GM12878 (cell line): ENCODE measurements at regions of chr11 and their contacts with region 1.

Region 1: DNA sequence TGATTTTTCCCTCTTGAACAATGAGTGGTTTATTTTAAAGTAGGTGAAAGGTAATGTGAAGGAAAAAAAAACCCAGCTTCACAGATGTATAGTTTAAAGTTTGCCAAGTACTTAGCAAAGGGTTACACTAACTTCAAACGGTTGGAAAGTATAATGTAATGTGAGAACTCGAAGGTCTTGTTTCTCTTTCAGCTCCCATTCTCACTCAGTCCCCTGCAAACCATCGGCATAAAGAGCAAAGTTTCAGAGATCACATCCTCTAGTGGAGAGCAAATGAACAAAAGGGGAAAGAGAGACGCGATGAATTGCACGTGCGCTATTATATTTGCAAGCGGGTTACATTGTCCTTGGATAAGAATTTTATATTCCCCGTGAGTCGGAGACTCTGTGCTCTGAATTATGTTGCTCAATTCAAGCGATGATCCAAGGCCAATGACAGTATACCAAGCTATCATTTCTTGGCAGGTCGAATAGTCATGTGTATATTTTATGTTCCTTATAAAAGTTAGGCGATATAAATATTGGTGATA is 37.6 kb upstream of the BIRC3 start:
- DNase-seq: peak; percentile 68
- ATAC-seq: peak; percentile 96
- H3K4me3 ChIP-seq: no peak overlapping the region
- H3K27ac ChIP-seq: no peak overlapping the region
- H3K4me1 ChIP-seq: peaks cover 4% of the 10 kb centered on the region; the same call in 1 of the 2 replicates
- H3K27me3 ChIP-seq: no peaks in the 10 kb centered on the region
- CTCF ChIP-seq: peak; percentile 16 to 30 (median 27); a peak in 3 of 6 replicates
- EP300 ChIP-seq: 0 out of 4 replicates have a peak, but pooled peaks of 1 of the 2 experiments have one; percentile 18
- POLR2A ChIP-seq: no peak
- RAD21 ChIP-seq: no peak

Region 2: DNA sequence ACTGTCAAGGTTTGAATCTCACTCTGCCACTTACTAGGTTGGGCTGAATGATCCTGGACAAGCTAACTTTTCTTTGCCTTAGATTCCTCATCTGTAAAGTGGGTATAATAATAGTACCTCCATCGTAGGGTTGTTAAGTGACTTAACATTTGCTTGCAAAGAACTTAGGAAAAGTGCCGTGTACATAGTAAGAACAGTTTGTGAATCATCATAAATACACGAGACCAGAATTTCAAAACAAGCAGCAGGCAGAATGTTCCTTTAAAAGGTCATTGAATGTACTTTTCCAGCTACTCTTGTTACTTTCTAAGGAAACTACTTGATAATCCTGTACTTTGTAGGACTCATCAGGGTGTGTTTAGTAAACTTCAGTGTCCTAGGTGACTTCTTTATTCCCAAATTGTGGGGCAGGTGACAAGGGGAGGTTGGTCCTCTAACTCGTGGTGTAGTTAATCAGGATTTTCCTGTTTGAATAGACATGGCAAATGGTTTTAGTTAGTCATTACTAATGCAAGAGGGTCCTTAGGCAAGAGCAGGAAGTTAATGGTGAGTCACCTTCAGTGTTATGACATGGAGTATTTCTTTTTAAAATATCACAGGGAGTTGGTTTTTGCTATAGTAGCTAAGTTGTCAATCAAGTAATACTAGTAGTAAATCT is 101.6 kb before region 1 on chr11:
- CTCF ChIA-PET with region 1: no interaction called
- POLR2A ChIA-PET with region 1: no interaction called
- RAD21 ChIA-PET with region 1: no interaction called
- SMC1A ChIA-PET with region 1: no interaction called
- in situ Hi-C with region 1: no loop called
- intact Hi-C with region 1: no loop called
- DNase-seq: no peak
- ATAC-seq: no peak
- H3K4me3 ChIP-seq: no peak overlapping the region
- H3K27ac ChIP-seq: no peak overlapping the region
- H3K4me1 ChIP-seq: no peaks in the 10 kb centered on the region
- H3K27me3 ChIP-seq: no peaks in the 10 kb centered on the region; a peak in 1 of 4 replicates
- CTCF ChIP-seq: no peak
- EP300 ChIP-seq: no peak
- POLR2A ChIP-seq: no peak
- RAD21 ChIP-seq: no peak

Region 3: DNA sequence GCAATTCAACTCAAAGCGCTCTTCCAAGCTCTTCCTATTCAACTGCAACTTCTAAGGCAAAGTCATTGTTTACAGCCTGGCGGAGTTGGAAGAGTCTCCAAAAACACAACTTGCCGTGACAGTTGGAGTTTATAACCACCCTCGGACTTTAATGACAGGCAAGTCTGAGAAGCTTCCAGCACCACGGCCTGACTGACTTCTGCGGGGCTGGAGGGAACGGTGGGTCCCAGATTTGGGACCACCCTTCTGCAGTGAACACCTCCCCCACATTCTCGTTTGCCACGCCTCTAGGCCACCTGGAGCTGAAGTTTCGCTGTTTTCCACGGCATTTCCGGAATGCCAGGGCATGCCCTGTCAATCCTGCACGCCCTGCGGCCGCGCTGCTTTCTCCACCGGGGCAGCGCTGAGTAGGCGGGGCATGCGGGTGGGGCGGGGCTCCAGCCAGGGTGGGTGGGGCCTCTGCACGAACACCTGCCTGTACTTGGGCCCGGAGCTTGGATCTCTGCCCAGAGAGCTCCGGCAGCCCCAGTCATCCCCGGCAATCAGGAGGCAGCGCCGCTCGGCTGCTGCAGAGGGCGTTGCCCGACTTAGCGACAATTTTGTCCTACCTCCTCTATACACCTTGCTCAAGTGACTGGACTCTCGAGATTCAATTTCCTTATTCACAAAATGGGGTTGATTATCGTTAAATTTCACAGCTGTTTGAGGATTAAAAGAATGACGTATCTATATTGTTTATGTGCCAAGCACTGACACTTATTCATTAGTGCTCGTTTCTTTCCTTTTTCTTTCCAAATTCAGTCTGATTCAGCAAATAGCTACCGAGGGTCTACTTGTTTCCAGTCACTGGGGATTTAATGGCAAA is 11.1 kb before region 1 on chr11:
- CTCF ChIA-PET with region 1: interaction called, 19 read pairs
- POLR2A ChIA-PET with region 1: interaction called, 4 read pairs
- RAD21 ChIA-PET with region 1: interaction called, 11 read pairs
- SMC1A ChIA-PET with region 1: interaction called, 17 read pairs
- in situ Hi-C with region 1: no loop called
- intact Hi-C with region 1: no loop called
- DNase-seq: peak; percentile 17
- ATAC-seq: peak; percentile 98
- H3K4me3 ChIP-seq: peak overlapping the region; percentile 66
- H3K27ac ChIP-seq: no peak overlapping the region
- H3K4me1 ChIP-seq: no peaks in the 10 kb centered on the region; the same call in 1 of the 2 replicates
- H3K27me3 ChIP-seq: peaks cover 0 to 8% of the 10 kb centered on the region in 2 experiments; a peak in 2 of 4 replicates
- CTCF ChIP-seq: peak in 2 of 3 experiments; percentile 43 to 55; a peak in 4 of 6 replicates
- EP300 ChIP-seq: no peak
- POLR2A ChIP-seq: no peak
- RAD21 ChIP-seq: peak; percentile 30; the same call in 1 of the 2 replicates